Activated naive CD4-positive, alpha-beta T cell treated with anti-CD3 and anti-CD28 coated beads, Interleukin-2, amount 10 ng/mL, durations not matched to agents 7 days and 5 days (primary cell): ENCODE measurements at regions of chr1 and their contacts with region 1.

Region 1: GRCh38 chr1:167220537-167221125 is at the start of gene POU2F1:
- DNase-seq: peak; percentile 99
- H3K4me3 Mint-ChIP-seq: peak within 1 kb of the TSS; percentile 92
- H3K27ac Mint-ChIP-seq: peak within 1 kb of the TSS; percentile 100
- H3K4me1 Mint-ChIP-seq: peaks cover 42% of the 10 kb centered on the region
- H3K27me3 Mint-ChIP-seq: peaks cover 6% of the 10 kb centered on the region

Region 2: DNA sequence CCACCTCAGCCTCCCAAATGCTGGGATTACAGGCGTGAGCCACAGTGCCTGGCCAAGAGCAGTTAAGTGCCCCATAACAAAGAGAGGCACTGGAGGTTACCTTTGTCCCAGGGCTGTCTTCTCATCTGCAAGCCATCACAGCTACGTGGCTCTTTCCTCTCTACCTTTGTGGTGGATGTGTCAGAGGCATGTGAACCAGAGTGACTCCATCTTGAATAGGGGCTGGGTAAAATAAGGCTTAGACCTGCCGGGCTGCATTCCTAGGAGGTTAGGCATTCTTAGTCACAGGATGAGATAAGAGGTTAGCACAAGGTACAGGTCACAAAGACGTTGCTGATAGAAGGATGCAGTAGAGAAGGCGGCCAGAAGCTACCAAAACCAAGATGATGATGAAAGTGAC is 59.4 kb before region 1 on chr1:
- CTCF ChIA-PET with region 1: no interaction called
- DNase-seq: no peak
- H3K4me3 Mint-ChIP-seq: no peak overlapping the region
- H3K27ac Mint-ChIP-seq: no peak overlapping the region
- H3K4me1 Mint-ChIP-seq: peaks cover 8% of the 10 kb centered on the region
- H3K27me3 Mint-ChIP-seq: peaks cover 16% of the 10 kb centered on the region

Region 3: DNA sequence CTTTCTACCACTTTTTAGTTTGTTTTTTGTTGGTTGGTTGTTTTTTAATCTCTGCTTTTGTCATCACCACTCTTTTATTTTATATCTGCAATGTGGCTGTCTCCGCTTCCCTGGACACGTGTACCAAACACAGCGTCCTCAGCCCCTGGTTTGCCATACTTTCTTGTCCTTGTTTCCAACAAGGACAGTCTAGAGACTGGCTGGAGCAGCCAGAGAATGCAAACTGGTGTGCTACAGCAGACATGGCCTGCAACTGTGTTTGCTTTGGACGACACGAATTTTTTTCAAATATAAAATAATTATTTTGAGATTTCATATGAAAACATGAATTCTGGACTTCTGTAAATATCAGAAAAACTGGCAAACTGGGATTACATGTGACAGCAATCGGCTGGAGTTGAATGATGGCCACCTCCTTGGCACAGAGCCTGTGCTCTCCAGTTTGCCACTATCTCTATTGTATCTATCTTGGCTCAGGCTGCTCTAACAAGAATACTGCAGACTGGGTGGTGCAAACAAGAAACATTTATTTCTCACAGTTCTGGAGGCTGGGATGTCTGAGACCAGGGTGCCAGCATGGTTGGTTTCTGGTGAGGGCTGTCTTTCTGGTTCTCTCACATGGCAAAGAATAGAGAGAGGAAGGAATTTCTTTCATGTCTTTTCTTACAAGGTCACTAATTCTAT is 34.5 kb before region 1 on chr1:
- CTCF ChIA-PET with region 1: no interaction called
- DNase-seq: no peak
- H3K4me3 Mint-ChIP-seq: no peak overlapping the region
- H3K27ac Mint-ChIP-seq: no peak overlapping the region
- H3K4me1 Mint-ChIP-seq: no peaks in the 10 kb centered on the region
- H3K27me3 Mint-ChIP-seq: peaks cover 26% of the 10 kb centered on the region

Region 4: GRCh38 chr1:167232801-167233200 is 12.2 kb after region 1 on chr1:
- CTCF ChIA-PET with region 1: interaction called, 10 read pairs
- DNase-seq: no peak
- H3K4me3 Mint-ChIP-seq: no peak overlapping the region
- H3K27ac Mint-ChIP-seq: no peak overlapping the region
- H3K4me1 Mint-ChIP-seq: peaks cover 6% of the 10 kb centered on the region
- H3K27me3 Mint-ChIP-seq: no peaks in the 10 kb centered on the region